ENCODE measurements at regions of chr1 and their contacts with region 1.

Region 1: GRCh38 chr1:77718181-77718580 is 35.7 kb upstream of the ZZZ3 start:
- DNase-seq: no peak
- ATAC-seq: no peak

Region 2: GRCh38 chr1:77759071-77760028 is 41.2 kb after region 1 on chr1 and contains the start of gene USP33:
- intact Hi-C with region 1: no loop called
- DNase-seq: peak; percentile 92
- ATAC-seq: peak; percentile 99
- total RNA-seq, gene USP33: 32.5 to 36.1 TPM

Region 3: DNA sequence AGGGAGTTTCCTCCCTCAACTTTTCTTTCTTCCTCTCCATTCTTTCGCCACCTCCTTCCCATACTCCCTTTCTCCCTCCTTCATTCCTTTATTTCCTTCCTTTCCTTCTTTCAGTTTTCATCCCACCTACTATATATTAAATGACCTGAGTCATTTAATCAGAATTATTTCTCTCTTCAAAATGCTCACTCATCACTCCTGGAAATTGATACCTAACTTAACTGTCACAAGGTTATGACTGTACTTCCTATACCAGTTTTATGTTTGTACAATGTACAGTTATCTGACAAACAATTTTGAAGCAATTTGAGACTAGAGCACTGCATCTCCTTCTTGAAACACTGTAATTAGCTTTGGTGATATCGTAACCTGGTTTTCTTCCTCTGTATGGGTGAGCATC is 211.6 kb after region 1 on chr1:
- intact Hi-C with region 1: loop called in 1 of 2 experiments (anchors 10 kb)
- DNase-seq: no peak
- ATAC-seq: no peak